ENCODE measurements at regions of chr1 and their contacts with region 1.

Region 1: GRCh38 chr1:209692745-209693504 is 11.7 kb upstream of the HSD11B1 start:
- DNase-seq: peak; percentile 60 to 68 (median 62)
- H3K4me3 ChIP-seq: no peak overlapping the region
- H3K4me3 Mint-ChIP-seq: peak overlapping the region in 1 of 8 donors; percentile 9
- H3K27ac ChIP-seq: no peak overlapping the region
- H3K27ac Mint-ChIP-seq: peak overlapping the region in 3 of 7 donors; percentile 43 to 66 (median 57)
- H3K4me1 ChIP-seq: peaks cover 15% of the 10 kb centered on the region
- H3K4me1 Mint-ChIP-seq: peaks cover 18 to 25% (median 22%) of the 10 kb centered on the region in 4 donors
- H3K27me3 ChIP-seq: no peaks in the 10 kb centered on the region
- H3K27me3 Mint-ChIP-seq: peaks cover 0 to 2% of the 10 kb centered on the region in 2 donors

Region 2: GRCh38 chr1:208652296-208653160 is 1040.4 kb before region 1 on chr1:
- CTCF ChIA-PET with region 1: no interaction called
- POLR2A ChIA-PET with region 1: no interaction called
- intact Hi-C with region 1: loop called (anchors 5 kb)
- DNase-seq: peak in 4 of 5 donors; percentile 3 to 14 (median 10)
- H3K4me3 ChIP-seq: no peak overlapping the region
- H3K4me3 Mint-ChIP-seq: no peak overlapping the region
- H3K27ac ChIP-seq: no peak overlapping the region
- H3K27ac Mint-ChIP-seq: no peak overlapping the region
- H3K4me1 ChIP-seq: no peaks in the 10 kb centered on the region
- H3K4me1 Mint-ChIP-seq: no peaks in the 10 kb centered on the region
- H3K27me3 ChIP-seq: no peaks in the 10 kb centered on the region
- H3K27me3 Mint-ChIP-seq: peaks cover 7 to 10% of the 10 kb centered on the region in 2 donors

Region 3: GRCh38 chr1:209542585-209542984 is 150.3 kb before region 1 on chr1:
- CTCF ChIA-PET with region 1: no interaction called
- POLR2A ChIA-PET with region 1: no interaction called
- intact Hi-C with region 1: no loop called
- DNase-seq: no peak
- H3K4me3 ChIP-seq: no peak overlapping the region
- H3K4me3 Mint-ChIP-seq: no peak overlapping the region
- H3K27ac ChIP-seq: no peak overlapping the region
- H3K27ac Mint-ChIP-seq: no peak overlapping the region
- H3K4me1 ChIP-seq: no peaks in the 10 kb centered on the region
- H3K4me1 Mint-ChIP-seq: no peaks in the 10 kb centered on the region
- H3K27me3 ChIP-seq: no peaks in the 10 kb centered on the region
- H3K27me3 Mint-ChIP-seq: peaks cover 9 to 28% of the 10 kb centered on the region in 2 donors

Region 4: DNA sequence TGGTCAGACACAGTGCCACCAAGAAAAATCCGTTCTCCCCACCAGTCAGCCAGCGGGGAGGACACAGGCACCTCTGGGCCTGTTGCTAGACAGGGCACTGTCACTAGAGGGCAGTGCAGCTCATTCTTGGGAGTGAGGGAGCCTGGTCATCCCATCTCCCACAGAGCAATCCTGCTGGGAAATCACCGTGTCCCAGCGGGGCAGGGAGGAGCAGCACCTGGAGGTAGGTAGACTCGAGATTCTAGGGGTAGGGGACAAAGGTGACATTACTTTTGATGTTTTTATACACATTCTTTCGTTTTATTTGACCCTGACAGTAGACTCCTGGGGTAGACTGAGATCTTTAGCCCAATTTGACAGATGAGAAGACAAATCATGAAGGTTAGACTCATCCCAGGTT is 116.1 kb before region 1 on chr1:
- CTCF ChIA-PET with region 1: interaction called, 124 read pairs
- POLR2A ChIA-PET with region 1: interaction called, 3 read pairs
- intact Hi-C with region 1: loop called (anchors 1 kb)
- DNase-seq: peak in 4 of 5 donors; percentile 47 to 60 (median 50)
- H3K4me3 ChIP-seq: no peak overlapping the region
- H3K4me3 Mint-ChIP-seq: no peak overlapping the region
- H3K27ac ChIP-seq: no peak overlapping the region
- H3K27ac Mint-ChIP-seq: peak overlapping the region in 3 of 7 donors; percentile 24 to 61 (median 53)
- H3K4me1 ChIP-seq: no peaks in the 10 kb centered on the region
- H3K4me1 Mint-ChIP-seq: peaks cover 0 to 2% (median under 1%) of the 10 kb centered on the region in 4 donors
- H3K27me3 ChIP-seq: peaks cover 5% of the 10 kb centered on the region
- H3K27me3 Mint-ChIP-seq: peaks cover 2 to 6% of the 10 kb centered on the region in 2 donors

Region 5: GRCh38 chr1:209601809-209602657 is 90.9 kb before region 1 on chr1:
- CTCF ChIA-PET with region 1: interaction called, 30 read pairs
- POLR2A ChIA-PET with region 1: no interaction called
- intact Hi-C with region 1: loop called (anchors 1 kb)
- DNase-seq: peak in 4 of 5 donors; percentile 18 to 35 (median 30)
- H3K4me3 ChIP-seq: no peak overlapping the region
- H3K4me3 Mint-ChIP-seq: no peak overlapping the region
- H3K27ac ChIP-seq: no peak overlapping the region
- H3K27ac Mint-ChIP-seq: no peak overlapping the region
- H3K4me1 ChIP-seq: no peaks in the 10 kb centered on the region
- H3K4me1 Mint-ChIP-seq: peaks cover 0 to 2% (median under 1%) of the 10 kb centered on the region in 4 donors
- H3K27me3 ChIP-seq: no peaks in the 10 kb centered on the region
- H3K27me3 Mint-ChIP-seq: peaks cover 1 to 9% of the 10 kb centered on the region in 2 donors

Region 6: GRCh38 chr1:209627732-209628196 is 65.2 kb before region 1 on chr1:
- CTCF ChIA-PET with region 1: interaction called, 5 read pairs
- POLR2A ChIA-PET with region 1: no interaction called
- intact Hi-C with region 1: loop called (anchors 1 kb)
- DNase-seq: peak; percentile 50 to 65 (median 61)
- H3K4me3 ChIP-seq: no peak overlapping the region
- H3K4me3 Mint-ChIP-seq: peak overlapping the region in 1 of 8 donors; percentile 23
- H3K27ac ChIP-seq: no peak overlapping the region
- H3K27ac Mint-ChIP-seq: no peak overlapping the region
- H3K4me1 ChIP-seq: peaks cover 4% of the 10 kb centered on the region
- H3K4me1 Mint-ChIP-seq: peaks cover 2 to 18% (median 6%) of the 10 kb centered on the region in 4 donors
- H3K27me3 ChIP-seq: no peaks in the 10 kb centered on the region
- H3K27me3 Mint-ChIP-seq: no peaks in the 10 kb centered on the region

Region 7: GRCh38 chr1:209674957-209675564 is 17.9 kb before region 1 on chr1 and contains the start of gene G0S2:
- CTCF ChIA-PET with region 1: interaction called, 26 read pairs
- POLR2A ChIA-PET with region 1: no interaction called
- intact Hi-C with region 1: no loop called
- DNase-seq: peak in 4 of 5 donors; percentile 7 to 38 (median 22)
- H3K4me3 ChIP-seq: peak within 1 kb of the TSS in 1 of 2 donors; percentile 50
- H3K4me3 Mint-ChIP-seq: peak within 1 kb of the TSS; percentile 64 to 90 (median 82)
- H3K27ac ChIP-seq: no peak within 1 kb of the TSS
- H3K27ac Mint-ChIP-seq: peak within 1 kb of the TSS; percentile 14 to 92 (median 36)
- H3K4me1 ChIP-seq: peaks cover 50% of the 10 kb centered on the region
- H3K4me1 Mint-ChIP-seq: peaks cover 38 to 75% (median 56%) of the 10 kb centered on the region in 4 donors
- H3K27me3 ChIP-seq: no peaks in the 10 kb centered on the region
- H3K27me3 Mint-ChIP-seq: peaks cover 8 to 13% of the 10 kb centered on the region in 2 donors
- total RNA-seq, gene G0S2: 1.2 TPM in 1 of 2 experiments, not detected in the other

Region 8: GRCh38 chr1:209714338-209714737 is 21.4 kb after region 1 on chr1:
- CTCF ChIA-PET with region 1: no interaction called
- POLR2A ChIA-PET with region 1: no interaction called
- intact Hi-C with region 1: no loop called
- DNase-seq: no peak
- H3K4me3 ChIP-seq: no peak overlapping the region
- H3K4me3 Mint-ChIP-seq: no peak overlapping the region
- H3K27ac ChIP-seq: no peak overlapping the region
- H3K27ac Mint-ChIP-seq: no peak overlapping the region
- H3K4me1 ChIP-seq: peaks cover 24% of the 10 kb centered on the region
- H3K4me1 Mint-ChIP-seq: peaks cover 22 to 29% (median 24%) of the 10 kb centered on the region in 4 donors
- H3K27me3 ChIP-seq: no peaks in the 10 kb centered on the region
- H3K27me3 Mint-ChIP-seq: peaks cover 0 to 2% of the 10 kb centered on the region in 2 donors